Breast epithelium (tissue), 4 donors: ENCODE measurements at regions of chr7 and their contacts with region 1.

Region 1: DNA sequence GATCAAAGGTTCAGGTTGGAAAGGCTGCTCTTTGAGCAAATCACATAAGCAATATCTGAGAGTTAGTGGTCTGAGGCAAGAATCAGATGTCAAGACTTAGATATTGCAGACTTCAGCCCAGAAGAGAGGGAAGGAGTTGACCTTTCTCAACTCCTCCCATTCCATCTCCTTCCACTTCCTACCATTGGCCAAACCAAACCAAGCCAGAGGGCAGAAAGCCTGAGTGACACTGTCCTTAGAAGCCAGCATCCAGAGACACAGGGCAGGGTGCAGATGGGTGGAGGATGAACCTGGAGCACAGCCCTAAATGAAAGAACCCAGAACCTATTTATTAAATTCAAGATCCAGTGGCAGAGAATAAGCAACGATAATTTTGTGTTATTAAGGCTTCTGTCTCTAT is 180.5 kb downstream of the HIBADH start:
- DNase-seq: no peak
- H3K4me3 ChIP-seq: no peak overlapping the region
- H3K27ac ChIP-seq: no peak overlapping the region
- H3K4me1 ChIP-seq: no peaks in the 10 kb centered on the region
- H3K27me3 ChIP-seq: no peaks in the 10 kb centered on the region
- CTCF ChIP-seq: no peak
- POLR2A ChIP-seq: no peak

Region 2: DNA sequence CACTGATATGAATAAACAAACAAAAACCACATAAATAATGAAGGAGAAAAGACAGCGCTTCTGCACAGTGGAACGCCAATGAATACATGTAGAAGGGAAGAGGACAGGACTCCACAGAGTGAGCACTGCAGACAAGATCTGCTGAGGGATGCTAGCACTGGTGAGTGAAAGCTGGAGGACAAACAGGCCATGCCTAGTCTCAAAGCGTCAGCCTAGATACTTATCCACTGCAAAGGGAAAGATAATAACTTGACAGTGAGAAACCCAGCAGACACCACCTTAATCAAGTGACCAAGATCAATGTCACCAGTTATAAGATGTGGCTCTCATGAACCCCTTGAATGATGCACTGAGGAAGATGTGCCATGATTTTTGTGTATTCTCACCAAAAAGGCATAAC is 845.4 kb before region 1 on chr7:
- intact Hi-C with region 1: loop called (anchors 5 kb)
- DNase-seq: no peak
- H3K4me3 ChIP-seq: no peak overlapping the region
- H3K27ac ChIP-seq: no peak overlapping the region
- H3K4me1 ChIP-seq: no peaks in the 10 kb centered on the region
- H3K27me3 ChIP-seq: no peaks in the 10 kb centered on the region
- CTCF ChIP-seq: no peak
- POLR2A ChIP-seq: no peak

Region 3: GRCh38 chr7:28272461-28272877 is 790.2 kb after region 1 on chr7:
- intact Hi-C with region 1: no loop called
- DNase-seq: no peak
- H3K4me3 ChIP-seq: peak overlapping the region in 1 of 3 donors; percentile 50
- H3K27ac ChIP-seq: no peak overlapping the region
- H3K4me1 ChIP-seq: no peaks in the 10 kb centered on the region
- H3K27me3 ChIP-seq: no peaks in the 10 kb centered on the region
- CTCF ChIP-seq: peak in 1 of 3 donors; percentile 14
- POLR2A ChIP-seq: no peak